ENCODE measurements at regions of chr13 and their contacts with region 1.

Region 1: GRCh38 chr13:50081679-50082425 is 66.6 kb downstream of the KCNRG start:
- DNase-seq: peak; percentile 99
- ATAC-seq: peak; percentile 79
- H3K4me3 Mint-ChIP-seq: peak overlapping the region; percentile 99
- H3K27ac Mint-ChIP-seq: peak overlapping the region; percentile 99
- H3K4me1 Mint-ChIP-seq: peaks cover 42% of the 10 kb centered on the region
- H3K27me3 Mint-ChIP-seq: no peaks in the 10 kb centered on the region

Region 2: GRCh38 chr13:49877629-49878218 is 204.1 kb before region 1 on chr13:
- CTCF ChIA-PET with region 1: no interaction called
- POLR2A ChIA-PET with region 1: no interaction called
- DNase-seq: no peak
- ATAC-seq: no peak
- H3K4me3 Mint-ChIP-seq: no peak overlapping the region
- H3K27ac Mint-ChIP-seq: no peak overlapping the region
- H3K4me1 Mint-ChIP-seq: no peaks in the 10 kb centered on the region
- H3K27me3 Mint-ChIP-seq: peaks cover 14% of the 10 kb centered on the region

Region 3: DNA sequence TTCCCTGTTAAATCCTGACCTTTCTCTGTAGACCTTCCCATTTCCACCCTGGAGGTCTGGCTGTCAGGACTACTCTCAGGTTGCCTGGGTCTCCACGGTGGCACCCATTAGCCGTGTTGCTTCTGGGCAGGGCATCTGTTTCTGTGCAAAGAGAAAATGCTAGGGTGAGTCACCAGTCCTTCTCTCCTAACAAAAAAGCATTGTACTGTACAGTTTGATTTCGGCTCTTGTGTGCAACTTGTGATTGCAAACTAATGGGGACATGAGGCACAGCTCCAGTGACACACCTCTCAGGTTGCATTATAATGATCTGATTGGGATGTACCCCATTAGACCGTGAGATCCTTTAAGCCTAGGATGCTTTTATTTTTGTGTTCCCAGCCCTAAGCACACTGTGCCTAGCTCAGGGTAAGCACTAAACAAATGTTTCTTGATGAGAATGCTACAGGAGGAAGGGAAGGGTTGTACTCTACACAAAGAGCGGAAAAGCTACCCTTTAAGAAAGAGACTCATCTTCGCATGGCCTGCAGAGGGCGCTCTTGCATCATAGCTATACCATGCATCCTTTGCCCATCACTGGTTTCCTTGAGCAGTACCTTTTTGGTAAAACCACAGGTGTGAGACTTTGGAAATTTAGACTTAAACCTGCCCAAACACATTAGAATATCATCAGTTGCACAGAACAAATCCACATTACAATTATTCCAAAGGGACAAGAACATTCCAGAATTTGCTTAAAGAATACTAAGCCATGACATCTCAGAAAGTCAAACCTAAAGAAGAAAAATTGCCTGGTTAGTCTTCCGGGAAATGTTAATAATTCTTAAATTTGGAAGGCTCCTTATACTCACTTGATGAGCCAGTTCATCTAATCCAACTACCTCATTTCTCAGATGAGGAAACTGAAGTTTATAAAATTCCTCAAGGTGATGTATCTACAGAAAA is 105.3 kb before region 1 on chr13:
- CTCF ChIA-PET with region 1: interaction called, 18 read pairs
- POLR2A ChIA-PET with region 1: no interaction called
- DNase-seq: peak; percentile 81
- ATAC-seq: peak; percentile 81
- H3K4me3 Mint-ChIP-seq: no peak overlapping the region
- H3K27ac Mint-ChIP-seq: no peak overlapping the region
- H3K4me1 Mint-ChIP-seq: peaks cover 4% of the 10 kb centered on the region
- H3K27me3 Mint-ChIP-seq: no peaks in the 10 kb centered on the region

Region 4: GRCh38 chr13:50094615-50095293 is 12.9 kb after region 1 on chr13:
- CTCF ChIA-PET with region 1: interaction called, 19 read pairs
- POLR2A ChIA-PET with region 1: interaction called, 10 read pairs
- DNase-seq: no peak
- ATAC-seq: no peak
- H3K4me3 Mint-ChIP-seq: no peak overlapping the region
- H3K27ac Mint-ChIP-seq: no peak overlapping the region
- H3K4me1 Mint-ChIP-seq: peaks cover 9% of the 10 kb centered on the region
- H3K27me3 Mint-ChIP-seq: no peaks in the 10 kb centered on the region

Region 5: GRCh38 chr13:50116430-50116973 is 34.6 kb after region 1 on chr13:
- CTCF ChIA-PET with region 1: interaction called, 14 read pairs
- POLR2A ChIA-PET with region 1: interaction called, 9 read pairs
- DNase-seq: no peak
- ATAC-seq: no peak
- H3K4me3 Mint-ChIP-seq: no peak overlapping the region
- H3K27ac Mint-ChIP-seq: no peak overlapping the region
- H3K4me1 Mint-ChIP-seq: no peaks in the 10 kb centered on the region
- H3K27me3 Mint-ChIP-seq: no peaks in the 10 kb centered on the region

Region 6: DNA sequence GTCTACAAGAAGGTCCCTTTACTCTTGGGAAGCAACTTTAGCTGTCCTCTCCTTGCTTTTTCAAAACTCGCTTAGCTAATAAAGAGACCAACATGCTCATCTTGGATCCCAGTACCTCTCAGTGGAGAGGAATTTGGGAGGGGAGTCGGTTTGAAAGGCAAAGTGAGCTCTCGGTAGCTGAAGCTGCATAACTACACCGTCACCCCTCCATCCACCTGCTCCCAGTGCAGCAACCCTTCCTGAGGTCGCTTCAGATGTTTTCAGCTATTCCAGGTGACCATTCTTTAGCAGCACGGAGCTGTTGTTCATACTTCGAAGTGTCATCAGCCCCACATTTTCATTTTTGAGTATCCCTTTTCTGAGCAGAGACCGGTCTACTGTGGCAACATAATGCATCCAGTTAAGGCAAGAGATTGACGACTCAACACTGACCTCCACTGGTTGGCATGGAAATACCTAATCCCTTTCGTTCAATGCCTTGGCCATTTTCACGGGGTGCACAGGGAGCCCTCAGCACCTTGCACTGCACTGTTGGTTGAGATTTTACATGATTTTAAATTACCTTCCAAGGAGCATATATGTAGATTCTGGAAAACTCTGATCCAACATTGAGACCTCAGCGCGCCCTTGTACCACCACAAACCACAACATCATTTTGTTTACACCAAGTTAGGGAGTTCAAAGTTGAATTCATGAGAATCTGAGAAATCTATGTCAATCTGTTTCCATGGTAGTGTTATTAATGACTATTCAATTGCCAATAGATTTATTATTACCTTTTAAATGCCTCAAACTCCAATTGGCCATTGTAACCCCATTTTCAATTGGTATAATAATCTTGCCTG is 719.5 kb after region 1 on chr13:
- CTCF ChIA-PET with region 1: interaction called, 38 read pairs
- POLR2A ChIA-PET with region 1: interaction called, 3 read pairs
- DNase-seq: peak; percentile 84
- ATAC-seq: peak; percentile 97
- H3K4me3 Mint-ChIP-seq: no peak overlapping the region
- H3K27ac Mint-ChIP-seq: peak overlapping the region; percentile 28
- H3K4me1 Mint-ChIP-seq: peaks cover 26% of the 10 kb centered on the region
- H3K27me3 Mint-ChIP-seq: no peaks in the 10 kb centered on the region